Heart right ventricle (tissue), 16 donors: ENCODE measurements at regions of chr13 and their contacts with region 1.

Region 1: GRCh38 chr13:27449936-27450828 is at the start of gene MTIF3:
- DNase-seq: peak; percentile 91 to 95
- ATAC-seq: peak; percentile 90 to 97 (median 93)
- H3K4me3 ChIP-seq: peak within 1 kb of the TSS; percentile 67 to 94 (median 87)
- H3K27ac ChIP-seq: peak within 1 kb of the TSS; percentile 97 to 100 (median 99)
- H3K4me1 ChIP-seq: peaks cover 0 to 63% (median 51%) of the 10 kb centered on the region in 9 donors
- H3K27me3 ChIP-seq: no peaks in the 10 kb centered on the region
- CTCF ChIP-seq: peak in 2 of 9 donors; percentile 5 to 11
- total RNA-seq, gene MTIF3: 103 to 207 (median 121) TPM

Region 2: GRCh38 chr13:27424246-27425157 is 25.7 kb before region 1 on chr13 and contains the start of gene GTF3A:
- intact Hi-C with region 1: loop called in 4 of 10 experiments (anchors 1 to 2 kb)
- DNase-seq: peak; percentile 81 to 88
- ATAC-seq: peak; percentile 89 to 96 (median 94)
- H3K4me3 ChIP-seq: peak within 1 kb of the TSS; percentile 75 to 93 (median 83)
- H3K27ac ChIP-seq: peak within 1 kb of the TSS; percentile 57 to 97 (median 93)
- H3K4me1 ChIP-seq: peaks cover 16 to 46% (median 36%) of the 10 kb centered on the region in 9 donors
- H3K27me3 ChIP-seq: no peaks in the 10 kb centered on the region
- CTCF ChIP-seq: no peak
- total RNA-seq, gene GTF3A: 137 to 262 (median 160) TPM